Activated CD8-positive, alpha-beta T cell treated with anti-CD3 and anti-CD28 coated beads for 36 hours (primary cell): ENCODE measurements at regions of chr9 and their contacts with region 1.

Region 1: DNA sequence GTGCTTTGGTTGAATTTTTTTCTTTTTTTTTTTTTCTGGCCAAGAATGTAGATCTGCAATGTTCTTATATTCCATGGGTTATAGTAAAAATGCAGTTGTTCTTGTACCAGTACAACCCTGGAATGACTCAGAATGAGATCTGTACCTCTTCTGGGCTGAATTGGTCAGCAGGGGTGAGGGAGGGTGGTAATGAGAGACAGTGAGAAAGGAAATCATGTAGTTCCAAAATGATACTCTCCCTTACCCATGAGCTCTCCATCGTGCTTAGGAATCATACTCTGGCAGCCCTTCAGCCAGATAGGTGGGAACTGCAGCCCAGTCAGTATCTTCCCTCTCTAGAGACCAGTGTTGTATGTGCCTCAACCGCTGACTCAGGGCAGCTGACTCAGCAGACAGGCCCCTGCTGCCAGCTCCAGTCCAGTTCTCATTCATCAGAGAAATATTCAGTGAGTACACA is 2.1 kb upstream of the GLIS3 start:
- DNase-seq: peak; percentile 31
- ATAC-seq: no peak
- H3K4me3 Mint-ChIP-seq: no peak overlapping the region
- H3K27ac Mint-ChIP-seq: no peak overlapping the region
- H3K4me1 Mint-ChIP-seq: peaks cover 55% of the 10 kb centered on the region
- H3K27me3 Mint-ChIP-seq: peaks cover 35% of the 10 kb centered on the region
- CTCF ChIP-seq: no peak

Region 2: GRCh38 chr9:4344946-4345345 is 42.9 kb after region 1 on chr9:
- CTCF ChIA-PET with region 1: interaction called, 9 read pairs
- POLR2A ChIA-PET with region 1: no interaction called
- intact Hi-C with region 1: loop called (anchors 5 kb)
- DNase-seq: peak; percentile 85
- ATAC-seq: peak; percentile 99
- H3K4me3 Mint-ChIP-seq: no peak overlapping the region
- H3K27ac Mint-ChIP-seq: no peak overlapping the region
- H3K4me1 Mint-ChIP-seq: peaks cover 16% of the 10 kb centered on the region
- H3K27me3 Mint-ChIP-seq: no peaks in the 10 kb centered on the region
- CTCF ChIP-seq: no peak